ENCODE measurements at regions of chr11 and their contacts with region 1.

Region 1: GRCh38 chr11:54979375-54979774 is 272.7 kb downstream of the OR4A5 start:
- DNase-seq: no peak
- H3K4me3 ChIP-seq: no peak overlapping the region
- H3K27ac ChIP-seq: no peak overlapping the region
- H3K4me1 ChIP-seq: no peaks in the 10 kb centered on the region
- H3K27me3 ChIP-seq: no peaks in the 10 kb centered on the region
- CTCF ChIP-seq: no peak

Region 2: GRCh38 chr11:55054723-55055122 is 75.3 kb after region 1 on chr11:
- CTCF ChIA-PET with region 1: no interaction called
- POLR2A ChIA-PET with region 1: no interaction called
- intact Hi-C with region 1: loop called (anchors 5 kb)
- DNase-seq: no peak
- H3K4me3 ChIP-seq: no peak overlapping the region
- H3K27ac ChIP-seq: no peak overlapping the region
- H3K4me1 ChIP-seq: no peaks in the 10 kb centered on the region
- H3K27me3 ChIP-seq: no peaks in the 10 kb centered on the region
- CTCF ChIP-seq: no peak

Region 3: DNA sequence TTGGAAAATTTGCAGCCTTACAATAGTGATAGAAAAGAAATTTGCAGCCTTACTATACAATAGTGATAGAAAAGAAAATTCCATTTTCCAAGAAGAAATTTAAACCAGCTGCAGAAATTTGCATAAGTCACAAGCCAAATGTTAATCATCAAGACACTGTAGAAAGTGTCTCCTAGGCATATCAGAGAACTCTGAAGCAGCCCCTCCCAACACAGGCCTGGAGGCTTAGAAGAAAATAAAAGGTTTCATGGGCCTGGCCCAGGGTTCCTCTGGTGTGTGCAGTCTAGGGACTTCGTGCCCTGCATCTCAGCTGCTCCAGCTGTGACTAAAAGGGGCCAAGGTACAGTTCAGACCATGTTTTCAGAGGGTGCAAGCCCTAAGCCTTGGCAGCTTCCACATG is 369.7 kb after region 1 on chr11:
- CTCF ChIA-PET with region 1: no interaction called
- POLR2A ChIA-PET with region 1: no interaction called
- intact Hi-C with region 1: no loop called
- DNase-seq: no peak
- H3K4me3 ChIP-seq: no peak overlapping the region
- H3K27ac ChIP-seq: no peak overlapping the region
- H3K4me1 ChIP-seq: no peaks in the 10 kb centered on the region
- H3K27me3 ChIP-seq: no peaks in the 10 kb centered on the region
- CTCF ChIP-seq: no peak

Region 4: DNA sequence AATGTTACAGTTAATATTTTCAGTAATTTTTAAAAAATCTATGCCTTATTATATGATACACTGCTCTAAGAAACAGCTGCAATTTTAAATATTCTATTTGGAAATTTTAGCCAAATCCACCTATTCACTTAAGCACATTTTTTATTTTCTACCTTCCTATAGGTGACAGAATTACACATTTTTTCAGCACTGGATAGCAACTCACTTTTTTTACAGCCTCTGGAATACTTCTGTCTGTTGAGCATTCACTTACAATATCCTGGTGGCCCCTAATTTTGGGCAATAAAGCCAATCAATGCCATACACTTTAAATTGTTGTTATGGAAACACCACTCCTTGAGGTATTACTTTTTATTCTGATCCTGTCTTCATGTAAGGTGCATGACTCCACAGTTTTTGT is 410.8 kb after region 1 on chr11:
- CTCF ChIA-PET with region 1: no interaction called
- POLR2A ChIA-PET with region 1: no interaction called
- intact Hi-C with region 1: no loop called
- DNase-seq: no peak
- H3K4me3 ChIP-seq: no peak overlapping the region
- H3K27ac ChIP-seq: no peak overlapping the region
- H3K4me1 ChIP-seq: no peaks in the 10 kb centered on the region
- H3K27me3 ChIP-seq: no peaks in the 10 kb centered on the region
- CTCF ChIP-seq: no peak

Region 5: DNA sequence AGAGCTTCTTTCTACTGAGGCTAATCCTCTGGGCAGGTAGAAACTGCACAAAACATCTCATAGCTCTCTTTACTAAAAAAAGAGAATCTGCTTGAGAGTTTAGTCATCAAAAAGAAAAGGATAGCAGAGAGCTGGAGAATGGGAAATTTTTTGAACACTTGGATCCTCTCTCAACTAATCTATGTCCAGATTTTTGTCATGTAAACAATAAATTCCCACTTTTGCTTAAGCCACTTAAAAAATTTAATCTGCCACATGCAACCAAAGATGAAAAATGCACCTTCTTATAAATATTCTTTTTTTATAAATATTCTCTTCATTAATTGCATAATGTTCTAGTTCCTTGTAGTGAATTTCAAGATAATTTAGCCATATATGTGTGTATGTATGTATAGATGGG is 869.7 kb after region 1 on chr11:
- CTCF ChIA-PET with region 1: no interaction called
- POLR2A ChIA-PET with region 1: no interaction called
- intact Hi-C with region 1: no loop called
- DNase-seq: no peak
- H3K4me3 ChIP-seq: no peak overlapping the region
- H3K27ac ChIP-seq: no peak overlapping the region
- H3K4me1 ChIP-seq: no peaks in the 10 kb centered on the region
- H3K27me3 ChIP-seq: no peaks in the 10 kb centered on the region
- CTCF ChIP-seq: no peak